ENCODE measurements at regions of chr12 and their contacts with region 1.

Region 1: DNA sequence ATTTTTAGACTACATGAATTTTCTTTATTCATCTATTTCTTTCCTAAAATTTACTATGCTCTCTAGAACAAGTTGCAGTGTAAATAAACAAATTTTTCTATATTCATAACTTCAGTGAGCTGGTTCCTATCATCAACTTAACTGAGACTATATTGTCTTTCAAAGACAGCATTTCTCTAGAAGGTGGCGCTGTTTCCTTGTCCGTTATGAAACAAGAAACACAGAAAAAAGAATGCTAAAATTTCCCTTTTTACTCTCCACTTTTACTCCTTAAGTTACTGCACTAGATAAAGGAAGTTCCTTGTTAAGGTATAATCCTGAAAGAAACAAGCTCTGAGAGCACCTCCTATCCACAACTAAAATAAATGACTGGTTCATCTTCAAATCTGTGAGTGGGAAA is 8.2 kb upstream of the CLEC2A start:
- DNase-seq: no peak
- H3K4me3 Mint-ChIP-seq: no peak overlapping the region
- H3K27ac Mint-ChIP-seq: no peak overlapping the region
- H3K4me1 Mint-ChIP-seq: peaks cover 26% of the 10 kb centered on the region
- H3K27me3 Mint-ChIP-seq: peaks cover 11% of the 10 kb centered on the region

Region 2: GRCh38 chr12:9888665-9889273 is 51.6 kb before region 1 on chr12:
- CTCF ChIA-PET with region 1: no interaction called
- DNase-seq: no peak
- H3K4me3 Mint-ChIP-seq: no peak overlapping the region
- H3K27ac Mint-ChIP-seq: no peak overlapping the region
- H3K4me1 Mint-ChIP-seq: peaks cover 7% of the 10 kb centered on the region
- H3K27me3 Mint-ChIP-seq: peaks cover 6% of the 10 kb centered on the region

Region 3: DNA sequence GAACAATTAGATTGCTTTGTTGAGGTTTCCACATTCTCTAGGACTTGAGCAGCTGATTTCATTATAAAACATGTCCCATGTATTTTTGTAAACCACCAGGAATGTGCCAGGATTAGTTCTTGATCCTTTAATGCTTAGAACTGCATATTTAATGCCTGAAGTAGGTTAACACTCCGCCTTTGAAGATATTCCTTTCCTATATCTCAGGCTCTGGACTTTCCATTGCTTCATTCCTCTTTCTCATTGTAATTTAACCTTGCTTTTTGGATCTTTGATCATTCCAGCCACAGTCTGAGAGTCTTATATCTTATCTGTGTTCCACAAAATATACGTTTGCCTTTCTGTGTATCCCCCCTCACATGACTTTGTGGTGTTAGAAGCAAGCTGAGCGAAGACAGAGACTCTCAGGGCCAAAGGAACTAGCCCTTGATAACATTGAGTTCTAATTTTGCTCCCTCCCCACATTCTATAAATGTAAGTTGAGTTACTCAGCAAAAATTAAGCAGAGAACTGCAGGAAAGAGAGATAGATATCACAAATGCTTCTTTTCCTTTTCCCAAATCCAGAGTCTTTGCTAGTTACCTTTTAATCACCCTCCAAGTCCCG is 60.9 kb after region 1 on chr12:
- CTCF ChIA-PET with region 1: interaction called, 10 read pairs
- DNase-seq: no peak
- H3K4me3 Mint-ChIP-seq: no peak overlapping the region
- H3K27ac Mint-ChIP-seq: no peak overlapping the region
- H3K4me1 Mint-ChIP-seq: no peaks in the 10 kb centered on the region
- H3K27me3 Mint-ChIP-seq: peaks cover 20% of the 10 kb centered on the region

Region 4: GRCh38 chr12:10012630-10013330 is 72.4 kb after region 1 on chr12:
- CTCF ChIA-PET with region 1: interaction called, 44 read pairs
- DNase-seq: no peak
- H3K4me3 Mint-ChIP-seq: no peak overlapping the region
- H3K27ac Mint-ChIP-seq: no peak overlapping the region
- H3K4me1 Mint-ChIP-seq: no peaks in the 10 kb centered on the region
- H3K27me3 Mint-ChIP-seq: peaks cover 15% of the 10 kb centered on the region

Measured in activated naive CD4-positive, alpha-beta T cell treated with anti-CD3 and anti-CD28 coated beads, Interleukin-2, amount 10 ng/mL, durations not matched to agents 7 days and 5 days (primary cell).